ENCODE measurements at regions of chr4 and their contacts with region 1.

Region 1: DNA sequence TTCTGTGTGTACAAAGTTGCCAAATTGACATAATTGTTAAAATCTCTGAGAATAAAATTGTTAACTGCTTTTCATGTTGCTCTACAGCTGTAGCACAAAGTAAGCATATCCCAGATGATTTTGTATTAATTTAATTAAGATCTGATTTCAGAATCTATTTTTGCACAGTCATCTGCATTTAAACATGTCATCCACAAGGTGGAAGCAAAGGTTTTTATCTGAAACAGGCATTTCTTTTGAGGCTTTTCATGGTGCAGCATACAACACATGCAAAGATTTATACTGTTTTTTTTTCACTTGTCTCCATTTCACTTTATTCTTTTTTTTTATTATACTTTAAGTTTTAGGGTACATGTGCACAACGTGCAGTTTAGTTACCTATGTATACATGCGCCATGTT is 51.2 kb downstream of the GC start:
- DNase-seq: peak; percentile 52
- H3K4me3 ChIP-seq: no peak overlapping the region
- CTCF ChIP-seq: peak; percentile 41

Region 2: DNA sequence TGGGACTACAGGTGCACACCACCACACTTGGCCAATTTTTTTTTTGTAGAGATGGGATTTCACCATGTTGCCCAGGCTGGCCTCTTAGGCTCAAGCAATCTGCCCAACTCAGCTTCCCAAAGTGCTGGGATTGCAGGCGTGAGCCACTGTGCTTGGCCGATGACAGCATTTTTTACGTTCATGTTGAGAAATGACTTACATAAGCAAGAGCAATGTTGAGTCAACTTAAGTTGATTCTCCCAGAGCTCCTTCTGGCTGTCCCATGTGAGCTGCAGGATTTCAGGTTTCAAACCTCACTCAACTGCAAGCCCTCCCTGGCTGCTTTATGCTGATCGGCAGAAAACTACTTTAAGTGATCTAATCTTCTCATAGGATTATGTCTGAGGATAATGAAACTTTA is 35.7 kb before region 1 on chr4:
- in situ Hi-C with region 1: no loop called
- DNase-seq: no peak
- H3K4me3 ChIP-seq: no peak overlapping the region
- CTCF ChIP-seq: no peak

Region 3: DNA sequence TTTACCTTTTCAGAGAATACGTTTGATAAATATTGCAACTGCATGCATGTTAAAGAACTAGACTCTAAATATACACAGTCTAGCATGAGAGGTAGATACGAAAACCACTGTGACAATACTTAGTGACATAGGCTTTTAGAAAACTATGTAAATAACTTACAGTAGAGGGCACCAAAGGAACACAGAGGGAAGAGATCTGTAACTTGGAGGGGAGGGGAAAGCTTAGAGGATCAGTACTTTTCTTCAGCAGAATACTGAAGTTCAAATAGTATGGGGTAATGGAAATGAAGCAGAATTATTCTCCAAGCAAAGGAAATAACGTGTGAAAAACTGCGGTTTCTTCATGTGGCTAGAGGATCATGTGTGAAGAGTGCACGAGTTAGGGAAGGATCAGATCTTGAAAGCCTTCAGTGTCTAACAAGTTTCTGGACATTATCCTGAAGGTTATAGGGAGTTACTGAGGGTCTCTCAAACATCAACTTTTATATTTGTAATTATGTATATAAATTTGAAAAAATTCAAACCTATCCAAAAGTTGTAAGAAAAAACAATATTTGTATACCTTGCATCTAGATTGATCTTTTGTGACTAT is 563.4 kb after region 1 on chr4:
- in situ Hi-C with region 1: loop called (anchors 25 kb)
- DNase-seq: peak; percentile 58
- H3K4me3 ChIP-seq: no peak overlapping the region
- CTCF ChIP-seq: peak; percentile 65